K562 (cell line): ENCODE measurements at regions of chr3 and their contacts with region 1.

Region 1: DNA sequence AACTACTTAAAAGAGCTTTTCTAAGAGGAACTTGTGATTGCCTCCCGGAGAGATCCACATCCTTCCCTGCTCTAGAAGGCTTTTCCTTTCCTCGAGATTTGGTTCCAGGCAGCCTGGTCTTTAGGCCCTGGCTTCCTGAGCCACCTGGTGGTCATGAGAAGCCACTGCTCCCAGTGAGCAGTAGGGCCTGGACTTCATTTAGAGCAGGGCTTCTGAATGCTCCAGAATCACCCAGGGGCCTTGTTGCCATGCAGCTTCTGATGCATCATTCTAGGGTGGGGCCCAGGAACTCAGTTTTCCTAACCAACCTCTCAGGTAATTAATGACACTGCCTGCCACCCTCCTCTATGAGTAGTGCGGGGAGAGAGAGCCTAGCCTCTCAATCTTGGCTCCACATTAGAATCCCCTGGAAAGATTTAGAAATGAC is 29.6 kb downstream of the PSMD6 start:
- DNase-seq: peak; percentile 48 to 62 (median 58)
- ATAC-seq: peak; percentile 95
- H3K4me3 ChIP-seq: no peak overlapping the region
- H3K27ac ChIP-seq: no peak overlapping the region
- H3K4me1 ChIP-seq: no peaks in the 10 kb centered on the region
- H3K27me3 ChIP-seq: no peaks in the 10 kb centered on the region
- CTCF ChIP-seq: peak; percentile 63 to 70 (median 66)
- EP300 ChIP-seq: no peak
- POLR2A ChIP-seq: no peak
- RAD21 ChIP-seq: peak; percentile 61 to 66

Region 2: DNA sequence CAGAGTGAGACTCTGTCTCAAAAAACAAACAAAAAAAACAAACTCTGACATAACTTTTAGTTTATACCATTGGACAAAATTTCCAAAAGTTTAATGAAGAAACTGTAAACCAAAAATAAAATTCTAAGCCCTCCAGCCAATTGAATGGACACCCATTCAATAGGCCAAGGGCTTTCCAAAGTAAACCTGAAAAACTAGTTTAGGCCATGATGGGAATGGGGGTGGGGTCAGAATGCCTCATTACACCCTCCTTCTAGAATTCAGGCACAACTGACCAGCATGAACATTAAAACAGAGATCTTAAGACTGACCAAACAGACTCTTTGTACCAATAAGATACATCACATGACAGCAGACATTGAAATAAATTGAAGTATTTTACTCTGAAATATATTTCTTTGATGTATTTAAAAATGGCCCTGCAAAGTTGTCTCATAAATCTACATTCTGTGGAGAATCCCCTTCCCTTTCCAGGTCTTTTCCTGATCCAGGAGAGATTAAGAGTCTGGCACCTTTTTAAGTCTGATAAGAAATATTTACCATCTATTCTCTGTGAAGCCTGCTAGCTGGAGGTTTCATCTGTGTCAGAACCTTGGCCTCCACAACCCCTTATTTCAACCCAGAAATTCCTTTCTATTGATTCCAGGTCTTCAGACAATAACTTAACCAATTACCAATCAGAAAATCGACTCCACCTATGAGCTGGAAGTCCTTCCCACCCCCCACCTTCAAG is 145.8 kb before region 1 on chr3:
- CTCF ChIA-PET with region 1: no interaction called
- POLR2A ChIA-PET with region 1: no interaction called
- in situ Hi-C with region 1: no loop called
- intact Hi-C with region 1: no loop called
- DNase-seq: no peak
- ATAC-seq: no peak
- H3K4me3 ChIP-seq: no peak overlapping the region
- H3K27ac ChIP-seq: no peak overlapping the region
- H3K4me1 ChIP-seq: no peaks in the 10 kb centered on the region
- H3K27me3 ChIP-seq: no peaks in the 10 kb centered on the region
- CTCF ChIP-seq: no peak
- EP300 ChIP-seq: no peak
- POLR2A ChIP-seq: no peak
- RAD21 ChIP-seq: no peak

Region 3: GRCh38 chr3:63961891-63962290 is 31.8 kb before region 1 on chr3:
- CTCF ChIA-PET with region 1: interaction called, 3 read pairs
- POLR2A ChIA-PET with region 1: no interaction called
- in situ Hi-C with region 1: no loop called
- intact Hi-C with region 1: loop called (anchors 2 kb)
- DNase-seq: peak; percentile 24 to 52 (median 44)
- ATAC-seq: peak; percentile 77
- H3K4me3 ChIP-seq: no peak overlapping the region
- H3K27ac ChIP-seq: no peak overlapping the region
- H3K4me1 ChIP-seq: peaks cover 3 to 15% of the 10 kb centered on the region in 2 experiments; a peak in 4 of 5 replicates
- H3K27me3 ChIP-seq: no peaks in the 10 kb centered on the region
- CTCF ChIP-seq: peak in 2 of 3 experiments; percentile 42 to 44; a peak in 3 of 6 replicates
- EP300 ChIP-seq: no peak
- POLR2A ChIP-seq: no peak
- RAD21 ChIP-seq: peak in 1 of 2 experiments; percentile 27; a peak in 1 of 4 replicates